PC-9 (cell line): ENCODE measurements at regions of chr19 and their contacts with region 1.

Region 1: GRCh38 chr19:1168877-1169791 is 4.9 kb downstream of the SBNO2 start:
- DNase-seq: peak; percentile 74 to 78
- H3K4me3 ChIP-seq: peak overlapping the region; percentile 78
- H3K27ac ChIP-seq: peak overlapping the region; percentile 84
- H3K4me1 ChIP-seq: peaks cover 50% of the 10 kb centered on the region
- H3K27me3 ChIP-seq: no peaks in the 10 kb centered on the region
- CTCF ChIP-seq: no peak

Region 2: DNA sequence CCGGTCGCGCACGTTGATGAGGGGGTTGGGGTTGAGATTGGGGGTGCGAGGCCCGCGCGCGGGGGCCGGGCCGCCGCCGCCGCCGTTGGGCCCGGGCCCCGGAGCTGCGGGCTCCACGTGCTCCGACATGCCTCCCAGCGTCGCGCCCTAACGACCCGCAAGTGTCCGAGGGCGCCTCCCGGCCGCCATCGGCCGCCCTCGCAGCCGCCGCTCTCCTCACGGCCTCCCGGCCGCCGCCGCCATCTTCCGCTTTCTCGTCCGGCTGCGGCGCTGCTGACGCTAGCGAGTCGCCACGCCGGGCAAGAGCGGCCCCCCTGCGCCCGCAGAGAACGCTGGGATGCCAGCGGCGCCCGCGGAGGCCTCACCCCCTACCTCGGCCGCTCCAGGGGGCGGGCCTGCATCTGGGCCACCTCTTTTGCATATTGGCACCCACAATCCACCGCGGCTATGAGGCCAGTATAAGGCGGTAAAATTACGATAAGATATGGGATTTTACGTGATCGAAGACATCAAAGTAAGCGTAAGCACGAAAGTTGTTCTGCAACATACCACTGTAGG is 148.2 kb before region 1 on chr19 and contains the start of gene TMEM259:
- CTCF ChIA-PET with region 1: no interaction called
- POLR2A ChIA-PET with region 1: no interaction called
- intact Hi-C with region 1: loop called (anchors 1 kb)
- DNase-seq: peak; percentile 82 to 97
- H3K4me3 ChIP-seq: peak within 1 kb of the TSS; percentile 86
- H3K27ac ChIP-seq: peak within 1 kb of the TSS; percentile 77
- H3K4me1 ChIP-seq: peaks cover 37% of the 10 kb centered on the region
- H3K27me3 ChIP-seq: no peaks in the 10 kb centered on the region
- CTCF ChIP-seq: no peak
- total RNA-seq, gene TMEM259: 155 and 162 TPM in 2 replicates

Region 3: GRCh38 chr19:2186071-2186846 is 1017.1 kb after region 1 on chr19:
- CTCF ChIA-PET with region 1: no interaction called
- POLR2A ChIA-PET with region 1: no interaction called
- intact Hi-C with region 1: no loop called
- DNase-seq: no peak
- H3K4me3 ChIP-seq: no peak overlapping the region
- H3K27ac ChIP-seq: no peak overlapping the region
- H3K4me1 ChIP-seq: no peaks in the 10 kb centered on the region
- H3K27me3 ChIP-seq: no peaks in the 10 kb centered on the region
- CTCF ChIP-seq: no peak